ENCODE measurements at regions of chr15 and their contacts with region 1.

Region 1: GRCh38 chr15:74322181-74323076 is 45.0 kb downstream of the CYP11A1 start:
- DNase-seq: peak; percentile 69 to 79
- H3K4me3 ChIP-seq: no peak overlapping the region
- H3K27ac ChIP-seq: no peak overlapping the region
- H3K4me1 ChIP-seq: peaks cover 0 to 31% (median 18%) of the 10 kb centered on the region in 4 donors
- H3K27me3 ChIP-seq: peaks cover 0 to 4% of the 10 kb centered on the region in 2 donors
- CTCF ChIP-seq: peak; percentile 78 to 87

Region 2: DNA sequence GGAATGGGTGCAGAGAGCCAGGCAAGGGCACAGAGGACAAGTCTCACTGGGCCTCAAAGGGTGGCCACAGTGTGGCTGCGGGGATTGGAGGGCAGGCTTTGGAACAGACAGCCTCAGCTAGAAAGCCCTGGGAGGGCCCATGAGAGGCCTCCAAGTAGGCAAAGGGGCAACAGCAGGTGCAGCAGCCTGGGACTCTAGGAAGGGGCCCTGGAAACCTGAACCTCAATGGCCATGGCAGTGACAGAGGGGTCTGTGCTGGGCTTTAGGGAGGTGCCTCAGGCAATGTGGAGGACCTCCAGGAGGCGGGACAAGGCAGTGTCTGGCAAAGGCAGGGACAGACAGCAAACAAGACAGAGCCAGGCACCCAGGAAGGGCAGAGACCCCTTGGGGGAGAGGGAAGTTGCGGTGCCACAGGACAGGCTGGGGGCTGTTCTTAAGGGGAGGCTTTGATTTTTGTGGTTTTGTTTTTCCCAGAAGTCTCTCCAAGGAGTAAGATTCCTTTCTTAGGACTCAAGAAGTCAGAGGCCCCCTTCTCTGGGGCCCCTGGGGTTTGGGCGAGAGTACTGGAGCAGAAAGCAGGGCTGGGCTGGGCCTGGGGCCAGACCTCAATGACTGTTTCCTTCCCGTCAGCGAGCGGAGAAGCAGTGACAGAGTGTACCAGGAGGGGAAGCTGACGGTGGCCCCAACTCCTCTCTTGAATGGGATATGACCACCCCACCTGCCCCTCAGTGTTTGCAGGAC is 340.0 kb before region 1 on chr15:
- intact Hi-C with region 1: loop called (anchors 5 kb)
- DNase-seq: peak; percentile 86 to 91
- H3K4me3 ChIP-seq: peak overlapping the region in 1 of 2 donors; percentile 19
- H3K27ac ChIP-seq: peak overlapping the region; percentile 82 to 85
- H3K4me1 ChIP-seq: peaks cover 3 to 47% (median 39%) of the 10 kb centered on the region in 4 donors
- H3K27me3 ChIP-seq: no peaks in the 10 kb centered on the region
- CTCF ChIP-seq: peak in 1 of 2 experiments; percentile 8

Region 3: GRCh38 chr15:74053941-74054529 is 268.4 kb before region 1 on chr15:
- intact Hi-C with region 1: loop called (anchors 10 kb)
- DNase-seq: peak; percentile 82 to 90
- H3K4me3 ChIP-seq: peak overlapping the region; percentile 3 to 23
- H3K27ac ChIP-seq: peak overlapping the region; percentile 49 to 62
- H3K4me1 ChIP-seq: peaks cover 0 to 57% (median 38%) of the 10 kb centered on the region in 4 donors
- H3K27me3 ChIP-seq: no peaks in the 10 kb centered on the region
- CTCF ChIP-seq: peak; percentile 59 to 73

Region 4: GRCh38 chr15:74228723-74229081 is 93.7 kb before region 1 on chr15:
- intact Hi-C with region 1: no loop called
- DNase-seq: no peak
- H3K4me3 ChIP-seq: no peak overlapping the region
- H3K27ac ChIP-seq: no peak overlapping the region
- H3K4me1 ChIP-seq: peaks cover 0 to 8% (median 4%) of the 10 kb centered on the region in 4 donors
- H3K27me3 ChIP-seq: peaks cover 0 to 33% of the 10 kb centered on the region in 2 donors
- CTCF ChIP-seq: no peak

Region 5: GRCh38 chr15:74275957-74276356 is 46.5 kb before region 1 on chr15:
- intact Hi-C with region 1: no loop called
- DNase-seq: no peak
- H3K4me3 ChIP-seq: no peak overlapping the region
- H3K27ac ChIP-seq: no peak overlapping the region
- H3K4me1 ChIP-seq: peaks cover 0 to 2% (median 0%) of the 10 kb centered on the region in 4 donors
- H3K27me3 ChIP-seq: peaks cover 0 to 60% of the 10 kb centered on the region in 2 donors
- CTCF ChIP-seq: no peak

Region 6: DNA sequence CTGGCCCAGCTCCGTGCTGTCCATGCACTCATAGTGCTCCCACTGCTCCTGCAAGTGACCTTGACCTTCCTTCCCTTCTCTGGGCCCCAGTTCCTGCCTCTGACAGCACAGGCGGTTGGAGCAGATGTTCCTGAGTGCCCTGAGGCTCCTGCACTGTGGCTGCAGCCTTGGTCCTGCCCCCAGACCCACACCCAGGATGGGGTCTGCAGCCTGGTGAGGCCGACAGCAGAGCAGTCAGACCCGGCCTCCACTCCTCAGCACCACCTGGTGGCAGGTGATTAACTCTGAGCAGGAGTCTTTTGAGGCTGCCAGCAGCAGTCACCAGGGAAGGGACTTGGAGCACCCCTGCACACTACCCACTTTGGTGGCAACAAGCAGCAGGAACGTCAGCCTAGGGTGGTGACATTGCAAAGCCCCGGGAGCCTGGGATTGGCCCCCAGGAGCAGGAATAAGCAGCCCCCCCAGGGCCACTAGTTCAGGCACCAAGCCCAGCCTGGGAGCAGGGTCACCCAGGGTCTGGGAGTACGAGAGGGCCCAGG is 19.5 kb before region 1 on chr15:
- intact Hi-C with region 1: no loop called
- DNase-seq: no peak
- H3K4me3 ChIP-seq: no peak overlapping the region
- H3K27ac ChIP-seq: no peak overlapping the region
- H3K4me1 ChIP-seq: peaks cover 0 to 3% (median 0%) of the 10 kb centered on the region in 4 donors
- H3K27me3 ChIP-seq: peaks cover 0 to 64% of the 10 kb centered on the region in 2 donors
- CTCF ChIP-seq: peak; percentile 54 to 55

Measured in tibial artery (tissue), 4 donors.